ENCODE measurements at regions of chr3 and their contacts with region 1.

Region 1: GRCh38 chr3:150183678-150184425 is 213.2 kb upstream of the PFN2 start:
- DNase-seq: peak; percentile 55
- H3K4me3 Mint-ChIP-seq: no peak overlapping the region
- H3K27ac Mint-ChIP-seq: no peak overlapping the region
- H3K4me1 Mint-ChIP-seq: no peaks in the 10 kb centered on the region
- H3K27me3 Mint-ChIP-seq: peaks cover 9% of the 10 kb centered on the region

Region 2: GRCh38 chr3:149967086-149967685 is 216.7 kb before region 1 on chr3:
- CTCF ChIA-PET with region 1: interaction called, 18 read pairs
- DNase-seq: no peak
- H3K4me3 Mint-ChIP-seq: no peak overlapping the region
- H3K27ac Mint-ChIP-seq: no peak overlapping the region
- H3K4me1 Mint-ChIP-seq: peaks cover 14% of the 10 kb centered on the region
- H3K27me3 Mint-ChIP-seq: peaks cover 27% of the 10 kb centered on the region

Measured in activated naive CD4-positive, alpha-beta T cell treated with anti-CD3 and anti-CD28 coated beads, Interleukin-2, amount 10 ng/mL, durations not matched to agents 7 days and 5 days (primary cell).